ENCODE measurements at regions of chr19 and their contacts with region 1.

Region 1: DNA sequence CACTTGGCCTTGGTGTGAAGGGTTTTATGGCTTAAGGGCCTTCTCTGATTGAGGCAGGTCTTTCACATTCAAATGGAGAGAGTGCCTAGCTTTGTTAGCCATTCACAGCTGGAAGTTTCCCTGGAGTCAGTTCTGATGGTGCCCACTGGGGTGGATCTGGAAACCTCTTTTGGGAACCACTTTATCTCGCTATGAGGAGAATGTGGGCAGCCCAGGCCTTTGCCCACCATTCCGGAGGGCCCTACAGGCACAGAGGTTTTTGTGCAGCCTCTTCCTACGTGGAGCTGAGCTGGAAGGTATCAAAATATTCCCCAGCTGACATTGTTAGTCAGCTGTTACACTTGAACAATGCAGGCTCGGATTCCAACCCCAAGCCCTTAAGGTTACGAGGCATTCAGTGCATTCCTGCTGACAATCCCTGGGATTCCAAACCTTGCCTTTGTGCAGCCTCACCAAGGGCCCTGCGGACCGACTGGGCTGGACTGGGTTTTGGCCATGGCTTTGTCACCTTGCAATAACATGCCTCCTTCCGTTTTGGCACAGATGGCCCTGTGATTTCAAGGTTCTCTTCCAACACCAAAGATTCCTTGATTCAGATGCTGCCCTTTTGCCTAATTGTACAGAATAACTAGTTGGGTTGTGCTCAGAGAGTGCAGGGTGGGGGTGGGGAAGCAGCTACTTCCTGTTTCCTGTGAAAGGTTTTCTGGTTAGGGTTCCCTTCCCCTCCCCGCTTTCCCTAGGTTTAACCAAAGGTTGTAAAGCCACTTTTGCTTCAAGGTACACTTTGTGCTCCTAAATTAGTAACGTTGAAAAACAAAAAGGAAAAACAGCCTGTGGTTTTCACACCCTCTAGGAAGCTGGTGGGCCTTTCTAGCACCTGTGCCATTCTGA is 27.0 kb downstream of the SAE1 start:
- DNase-seq: peak; percentile 42 to 68
- ATAC-seq: peak; percentile 78 to 90 (median 81)
- H3K4me3 ChIP-seq: peak overlapping the region in 3 of 10 donors; percentile 1 to 11 (median 5)
- H3K27ac ChIP-seq: peak overlapping the region; percentile 63 to 95 (median 85)
- H3K4me1 ChIP-seq: peaks cover 15 to 74% (median 50%) of the 10 kb centered on the region in 9 donors
- H3K27me3 ChIP-seq: no peaks in the 10 kb centered on the region
- CTCF ChIP-seq: peak in 1 of 9 donors; percentile 20

Region 2: DNA sequence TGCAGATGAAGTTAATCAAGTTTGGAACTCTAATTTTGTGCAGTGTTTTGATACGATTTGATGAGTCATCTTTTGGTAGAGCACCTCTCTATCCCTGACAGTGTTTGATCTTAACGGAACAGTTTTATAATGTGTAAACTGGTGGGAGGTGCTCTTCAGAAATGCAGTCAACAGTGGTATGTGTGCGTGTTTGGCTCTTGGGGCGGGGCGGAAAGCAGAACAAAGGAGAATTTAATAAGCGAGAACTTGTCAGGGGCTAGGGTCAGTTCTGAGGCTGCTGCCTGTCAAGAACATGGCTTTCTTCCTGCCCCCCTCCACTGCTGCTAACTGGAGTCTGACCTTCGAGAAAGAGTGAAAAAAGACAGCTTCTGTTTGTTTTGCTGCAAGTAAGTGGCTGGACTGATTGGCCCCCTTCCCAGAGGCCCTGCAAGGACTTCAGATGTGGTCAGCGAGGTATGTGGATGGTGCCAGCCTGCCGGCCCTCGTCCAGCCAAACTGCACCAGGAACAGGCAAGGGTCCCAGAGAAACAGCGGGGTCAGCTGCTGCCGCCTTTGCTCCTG is 32.6 kb after region 1 on chr19:
- intact Hi-C with region 1: loop called in 2 of 10 experiments (anchors 5 kb)
- DNase-seq: peak; percentile 32 to 35
- ATAC-seq: peak; percentile 31 to 68 (median 60)
- H3K4me3 ChIP-seq: peak overlapping the region in 3 of 10 donors; percentile 2 to 28 (median 13)
- H3K27ac ChIP-seq: peak overlapping the region; percentile 2 to 82 (median 72)
- H3K4me1 ChIP-seq: peaks cover 7 to 25% (median 21%) of the 10 kb centered on the region in 9 donors
- H3K27me3 ChIP-seq: no peaks in the 10 kb centered on the region
- CTCF ChIP-seq: no peak

Region 3: GRCh38 chr19:47203254-47203653 is 45.6 kb after region 1 on chr19:
- intact Hi-C with region 1: loop called in 3 of 10 experiments (anchors 5 kb)
- DNase-seq: no peak
- ATAC-seq: no peak
- H3K4me3 ChIP-seq: no peak overlapping the region
- H3K27ac ChIP-seq: no peak overlapping the region
- H3K4me1 ChIP-seq: peaks cover 0 to 5% (median 0%) of the 10 kb centered on the region in 9 donors
- H3K27me3 ChIP-seq: no peaks in the 10 kb centered on the region
- CTCF ChIP-seq: no peak

Region 4: DNA sequence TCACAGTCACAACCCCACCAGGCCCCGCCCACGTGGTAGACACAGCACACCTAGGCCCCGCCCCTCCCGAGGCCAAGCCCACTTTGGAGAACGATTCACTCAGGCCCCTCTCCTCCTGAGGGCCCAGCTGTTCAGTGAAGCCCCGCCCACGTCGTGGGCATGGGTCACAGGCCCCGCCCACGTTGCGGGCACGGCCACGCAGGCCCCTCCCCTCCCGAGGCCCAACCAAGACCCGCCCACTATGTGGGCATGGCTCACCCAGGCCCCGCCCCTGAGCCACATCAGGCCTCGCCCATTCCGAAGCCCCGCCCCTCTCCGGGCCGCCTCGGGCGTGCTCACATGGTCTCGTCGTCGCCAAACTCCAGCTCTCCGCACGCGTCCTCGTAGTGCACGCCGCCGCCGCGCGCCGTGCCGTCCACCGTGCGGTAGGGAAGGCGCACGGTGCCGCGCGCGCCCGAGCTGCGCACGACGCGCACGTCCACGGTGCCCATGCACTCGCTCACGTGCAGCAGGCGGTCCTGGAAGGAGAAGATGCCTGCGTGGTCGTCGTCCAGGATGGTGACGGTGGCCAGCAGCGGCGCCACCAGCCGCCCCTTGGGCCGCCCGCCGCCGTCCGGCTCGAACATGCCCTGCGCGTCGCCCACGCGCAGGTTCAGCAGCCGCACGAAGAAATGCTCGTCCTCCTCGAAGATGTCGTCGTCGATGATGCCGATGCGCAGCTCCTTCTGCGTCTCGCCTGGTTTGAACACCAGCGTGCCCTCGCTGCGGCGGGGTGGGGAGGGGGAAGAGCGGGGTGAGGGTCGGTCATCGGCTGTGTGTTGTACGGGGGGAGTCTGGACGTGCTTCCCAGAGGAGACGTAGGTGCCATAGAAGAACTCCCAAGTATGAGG is 290.0 kb after region 1 on chr19:
- intact Hi-C with region 1: no loop called
- DNase-seq: peak in 1 of 2 donors; percentile 36
- ATAC-seq: peak in 6 of 8 donors; percentile 29 to 65 (median 38)
- H3K4me3 ChIP-seq: peak overlapping the region in 1 of 10 donors; percentile 22
- H3K27ac ChIP-seq: no peak overlapping the region
- H3K4me1 ChIP-seq: peaks cover 0 to 33% (median 15%) of the 10 kb centered on the region in 9 donors
- H3K27me3 ChIP-seq: peaks cover 5 to 88% (median 84%) of the 10 kb centered on the region in 7 donors
- CTCF ChIP-seq: no peak